Right ventricle myocardium superior (tissue), 1 donor: ENCODE measurements at regions of chr1 and their contacts with region 1.

Region 1: DNA sequence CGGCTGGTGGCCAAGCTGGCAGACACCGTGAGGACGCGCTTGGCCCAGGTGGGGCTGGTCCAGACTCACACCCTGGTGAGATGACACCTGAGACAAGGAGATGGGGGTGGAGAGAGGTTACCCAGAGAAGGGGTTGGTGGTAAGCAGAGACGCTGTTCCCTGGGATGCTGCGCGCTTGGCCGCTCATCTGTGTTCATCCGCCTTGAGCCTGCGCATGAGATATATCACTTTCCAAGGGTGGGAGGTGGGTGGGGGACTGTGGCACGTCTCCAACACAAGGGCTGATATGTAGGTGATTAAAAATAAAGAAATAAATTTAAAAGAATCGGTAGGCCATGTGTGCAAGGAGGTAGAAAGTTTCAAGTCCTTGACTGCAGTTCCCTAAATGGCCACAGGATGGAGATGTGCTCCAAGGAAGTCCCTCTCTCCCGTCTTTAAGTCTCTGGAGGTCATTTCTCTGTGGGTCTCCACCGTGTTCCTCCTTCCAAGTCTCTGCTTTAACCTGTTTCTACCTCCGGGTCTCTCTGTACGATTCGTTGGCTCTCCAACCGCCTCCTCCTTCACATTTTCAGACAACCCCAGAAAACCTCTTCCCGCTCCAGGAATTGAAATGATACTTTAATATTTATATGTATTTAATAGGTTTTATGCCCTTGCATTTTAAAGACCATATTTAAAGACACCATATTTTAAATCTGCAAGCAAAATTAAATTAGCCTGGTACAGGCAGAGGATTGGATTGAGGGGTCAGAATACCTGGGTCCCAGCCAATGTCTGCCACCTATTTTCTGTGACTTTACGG is 4.5 kb downstream of the TTC24 start:
- DNase-seq: no peak
- ATAC-seq: peak; percentile 66

Region 2: GRCh38 chr1:156652131-156652991 is 68.3 kb after region 1 on chr1:
- intact Hi-C with region 1: loop called (anchors 5 kb)
- DNase-seq: no peak
- ATAC-seq: no peak